ENCODE measurements at regions of chr6 and their contacts with region 1.

Region 1: GRCh38 chr6:35202066-35202546 is 11.7 kb upstream of the SCUBE3 start:
- DNase-seq: no peak
- H3K27ac ChIP-seq: no peak overlapping the region
- CTCF ChIP-seq: no peak

Region 2: GRCh38 chr6:35146453-35146852 is 55.7 kb before region 1 on chr6:
- CTCF ChIA-PET with region 1: interaction called, 36 read pairs
- POLR2A ChIA-PET with region 1: no interaction called
- DNase-seq: peak; percentile 45
- H3K27ac ChIP-seq: no peak overlapping the region
- CTCF ChIP-seq: peak; percentile 20

Region 3: DNA sequence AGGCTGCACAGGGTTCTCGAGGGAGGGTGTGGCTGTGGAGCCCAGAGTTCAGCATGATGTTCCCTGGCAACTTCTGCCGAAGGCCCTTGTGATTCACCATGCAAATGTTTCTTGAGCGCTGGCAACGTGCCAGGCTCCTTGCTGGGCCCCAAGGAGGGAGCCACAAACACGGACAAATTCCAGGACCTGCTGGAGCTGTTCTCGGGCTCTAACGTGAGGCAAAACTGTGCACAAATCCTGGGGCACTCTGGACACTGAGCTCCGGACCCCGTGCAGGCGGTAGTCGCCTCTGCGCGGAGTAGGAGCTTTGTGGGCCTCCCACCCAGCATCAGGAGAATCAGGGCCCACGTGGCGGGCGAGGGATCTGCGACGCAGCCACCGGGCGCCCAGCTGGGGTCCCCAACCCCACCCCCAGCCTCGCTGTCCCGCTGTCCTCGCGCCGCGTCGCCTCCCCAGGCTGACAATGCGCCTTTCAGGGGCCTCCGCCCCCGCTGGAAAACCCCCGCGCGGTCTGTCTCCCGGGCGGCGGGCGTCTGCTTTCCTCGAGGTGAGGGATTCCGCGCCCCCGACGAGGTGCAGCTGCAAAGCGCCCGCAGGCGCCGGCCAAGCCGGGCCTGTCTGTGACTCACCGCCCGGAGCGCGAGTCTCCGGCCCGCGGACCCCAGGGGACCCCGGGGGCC is 20.0 kb before region 1 on chr6:
- CTCF ChIA-PET with region 1: no interaction called
- POLR2A ChIA-PET with region 1: no interaction called
- DNase-seq: peak; percentile 78
- H3K27ac ChIP-seq: peak overlapping the region; percentile 39; the same call in 1 of the 2 replicates
- CTCF ChIP-seq: no peak

Region 4: DNA sequence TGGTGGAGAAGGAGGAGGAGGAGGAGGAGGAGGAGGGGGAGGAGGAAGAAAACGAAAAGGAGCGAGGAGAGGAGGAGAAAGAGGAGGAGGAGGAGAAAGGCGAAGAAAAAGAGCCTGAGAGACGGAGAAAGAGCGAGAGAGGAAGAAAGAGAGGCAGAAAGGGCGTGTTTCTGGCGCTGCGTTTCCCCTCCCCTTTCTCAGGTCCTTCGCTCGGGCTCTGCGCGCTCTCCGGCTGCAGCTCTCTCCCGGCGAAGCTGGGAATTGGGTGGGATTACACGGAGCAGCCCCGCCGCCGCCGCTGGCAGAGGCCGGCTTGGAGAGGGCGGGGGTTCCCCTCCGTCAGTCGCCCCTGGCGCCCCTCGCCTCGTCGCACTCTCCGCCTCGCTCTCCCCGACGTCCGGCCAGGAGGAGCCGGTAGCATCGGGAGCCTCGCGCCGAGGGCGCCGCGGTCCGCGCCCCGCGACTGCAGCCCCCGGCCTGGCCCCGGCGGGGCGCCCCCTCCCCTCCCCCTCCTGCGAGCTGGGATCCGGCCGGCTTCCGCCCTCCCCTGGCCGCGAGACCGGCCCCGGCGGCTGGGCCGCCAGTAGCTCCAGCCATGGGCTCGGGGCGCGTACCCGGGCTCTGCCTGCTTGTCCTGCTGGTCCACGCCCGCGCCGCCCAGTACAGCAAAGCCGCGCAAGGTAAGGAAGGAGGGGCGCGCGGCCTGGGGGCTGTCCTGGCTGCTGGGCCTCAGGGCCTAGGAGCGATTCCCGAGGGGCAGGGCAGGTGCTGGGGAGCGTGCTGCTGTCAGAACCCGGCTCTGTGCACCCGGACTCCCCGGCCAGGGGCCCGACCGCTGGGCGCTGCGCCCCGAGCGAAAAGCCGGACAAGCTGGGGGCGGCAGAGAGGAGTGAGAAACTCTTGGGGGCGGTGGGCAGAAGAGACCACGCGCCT is 12.0 kb after region 1 on chr6 and contains the start of gene SCUBE3:
- CTCF ChIA-PET with region 1: interaction called, 10 read pairs
- POLR2A ChIA-PET with region 1: no interaction called
- DNase-seq: peak; percentile 41
- H3K27ac ChIP-seq: no peak within 1 kb of the TSS
- CTCF ChIP-seq: no peak

Measured in RWPE1 (cell line).